Activated CD4-positive, alpha-beta T cell treated with anti-CD3 and anti-CD28 coated beads, Interleukin-2, amount 10 ng/mL, durations not matched to agents 24 days and 14 days (primary cell): ENCODE measurements at regions of chr17 and their contacts with region 1.

Region 1: DNA sequence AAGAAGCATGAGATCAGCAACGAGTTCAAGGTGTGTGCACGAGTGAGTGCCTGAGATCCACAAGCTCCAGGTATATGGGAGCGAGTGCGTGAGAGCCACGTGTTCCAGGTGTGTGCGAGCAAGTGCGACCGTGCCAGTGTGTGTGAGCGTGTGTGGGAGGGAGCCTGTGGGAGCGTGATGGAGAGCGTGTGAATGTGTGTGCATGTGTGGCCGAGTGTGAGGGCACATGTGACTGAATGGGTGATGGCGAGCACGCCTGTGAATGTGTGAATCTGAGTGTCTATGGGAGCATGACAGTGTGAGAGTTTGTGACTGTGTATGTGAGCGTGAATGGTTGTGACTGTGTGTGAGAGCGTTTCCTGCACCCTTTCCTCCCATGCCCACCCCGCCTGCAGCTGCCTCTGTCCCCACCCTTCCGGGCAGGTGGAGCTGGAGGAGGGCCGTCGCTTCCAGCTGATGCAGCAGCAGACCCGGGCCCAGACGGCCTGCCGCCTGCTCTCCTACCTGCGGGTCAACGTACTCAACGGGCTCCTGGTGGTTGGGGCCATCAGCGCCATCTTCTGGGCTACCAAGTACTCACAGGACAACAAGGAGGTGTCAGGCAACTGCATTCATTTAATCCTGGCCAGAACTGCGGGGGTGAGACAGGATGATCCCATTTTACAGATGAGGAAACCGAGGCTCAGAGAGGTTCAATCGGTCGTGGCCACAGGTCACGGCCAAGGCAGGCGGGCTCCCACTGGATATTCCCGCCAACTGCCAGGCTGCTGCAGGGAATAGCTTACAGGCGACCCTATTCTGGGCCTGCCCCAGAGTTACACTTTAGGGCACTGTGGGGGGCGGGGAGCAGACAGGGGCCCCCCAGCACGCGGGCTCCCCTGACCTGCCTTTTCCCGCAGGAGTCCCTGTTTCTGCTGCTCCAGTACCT is 3.7 kb downstream of the TMC8 start:
- DNase-seq: peak; percentile 94
- H3K4me3 Mint-ChIP-seq: peak overlapping the region; percentile 83
- H3K27ac Mint-ChIP-seq: peak overlapping the region; percentile 67
- H3K4me1 Mint-ChIP-seq: peaks cover 75% of the 10 kb centered on the region
- H3K27me3 Mint-ChIP-seq: no peaks in the 10 kb centered on the region

Region 2: GRCh38 chr17:77465358-77466041 is 668.7 kb before region 1 on chr17:
- intact Hi-C with region 1: loop called (anchors 5 kb)
- DNase-seq: peak; percentile 93
- H3K4me3 Mint-ChIP-seq: peak overlapping the region; percentile 77
- H3K27ac Mint-ChIP-seq: peak overlapping the region; percentile 91
- H3K4me1 Mint-ChIP-seq: peaks cover 71% of the 10 kb centered on the region
- H3K27me3 Mint-ChIP-seq: no peaks in the 10 kb centered on the region

Region 3: GRCh38 chr17:78082988-78083387 is 51.2 kb before region 1 on chr17:
- intact Hi-C with region 1: loop called (anchors 2 kb)
- DNase-seq: no peak
- H3K4me3 Mint-ChIP-seq: no peak overlapping the region
- H3K27ac Mint-ChIP-seq: no peak overlapping the region
- H3K4me1 Mint-ChIP-seq: peaks cover 6% of the 10 kb centered on the region
- H3K27me3 Mint-ChIP-seq: no peaks in the 10 kb centered on the region

Region 4: GRCh38 chr17:78101112-78101511 is 33.1 kb before region 1 on chr17:
- intact Hi-C with region 1: no loop called
- DNase-seq: no peak
- H3K4me3 Mint-ChIP-seq: no peak overlapping the region
- H3K27ac Mint-ChIP-seq: no peak overlapping the region
- H3K4me1 Mint-ChIP-seq: no peaks in the 10 kb centered on the region
- H3K27me3 Mint-ChIP-seq: no peaks in the 10 kb centered on the region

Region 5: GRCh38 chr17:78112518-78113226 is 21.6 kb before region 1 on chr17:
- intact Hi-C with region 1: loop called (anchors 1 kb)
- DNase-seq: peak; percentile 94
- H3K4me3 Mint-ChIP-seq: no peak overlapping the region
- H3K27ac Mint-ChIP-seq: no peak overlapping the region
- H3K4me1 Mint-ChIP-seq: peaks cover 30% of the 10 kb centered on the region
- H3K27me3 Mint-ChIP-seq: no peaks in the 10 kb centered on the region

Region 6: DNA sequence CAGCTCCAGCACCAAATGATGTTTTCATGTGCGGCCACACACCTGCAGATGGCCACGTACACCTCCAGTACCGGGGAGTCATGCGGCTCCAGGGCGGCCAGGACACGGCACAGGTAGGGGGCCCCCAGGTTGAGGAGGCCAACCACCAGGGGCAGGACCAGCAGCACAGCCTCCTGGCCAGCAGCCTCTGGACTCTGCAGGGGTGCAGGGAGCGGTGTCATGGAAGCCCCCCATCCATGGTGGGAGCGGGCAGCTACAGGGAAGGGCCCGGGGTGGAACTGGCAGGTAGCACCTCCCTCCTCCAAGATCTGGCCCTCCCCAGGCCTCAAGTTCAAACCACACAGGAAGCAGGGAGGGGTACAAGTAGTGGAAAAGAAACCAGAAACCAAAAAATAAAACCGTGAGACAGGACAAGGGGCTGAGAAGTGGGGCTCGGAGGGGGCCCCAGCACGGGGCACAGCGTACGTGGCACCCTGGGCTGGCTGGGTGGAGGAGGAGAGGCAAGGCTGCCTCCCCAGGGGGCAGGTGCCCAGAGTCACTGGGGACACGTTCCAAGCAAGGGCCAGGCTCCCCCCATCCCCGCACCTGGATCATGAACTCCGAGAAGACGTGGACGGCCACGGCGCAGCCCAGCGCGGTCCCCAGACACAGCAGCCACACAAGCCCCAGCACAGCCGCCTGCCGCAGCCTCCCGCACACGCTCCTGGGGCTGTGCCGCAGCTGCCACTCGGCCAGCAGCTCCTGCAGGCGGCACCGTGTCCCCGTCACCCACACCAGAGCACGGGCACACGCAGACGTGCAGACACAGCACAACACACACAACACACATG is 13.0 kb before region 1 on chr17:
- intact Hi-C with region 1: loop called (anchors 1 kb)
- DNase-seq: peak; percentile 91
- H3K4me3 Mint-ChIP-seq: peak overlapping the region; percentile 87
- H3K27ac Mint-ChIP-seq: peak overlapping the region; percentile 87
- H3K4me1 Mint-ChIP-seq: peaks cover 50% of the 10 kb centered on the region
- H3K27me3 Mint-ChIP-seq: no peaks in the 10 kb centered on the region

Region 7: DNA sequence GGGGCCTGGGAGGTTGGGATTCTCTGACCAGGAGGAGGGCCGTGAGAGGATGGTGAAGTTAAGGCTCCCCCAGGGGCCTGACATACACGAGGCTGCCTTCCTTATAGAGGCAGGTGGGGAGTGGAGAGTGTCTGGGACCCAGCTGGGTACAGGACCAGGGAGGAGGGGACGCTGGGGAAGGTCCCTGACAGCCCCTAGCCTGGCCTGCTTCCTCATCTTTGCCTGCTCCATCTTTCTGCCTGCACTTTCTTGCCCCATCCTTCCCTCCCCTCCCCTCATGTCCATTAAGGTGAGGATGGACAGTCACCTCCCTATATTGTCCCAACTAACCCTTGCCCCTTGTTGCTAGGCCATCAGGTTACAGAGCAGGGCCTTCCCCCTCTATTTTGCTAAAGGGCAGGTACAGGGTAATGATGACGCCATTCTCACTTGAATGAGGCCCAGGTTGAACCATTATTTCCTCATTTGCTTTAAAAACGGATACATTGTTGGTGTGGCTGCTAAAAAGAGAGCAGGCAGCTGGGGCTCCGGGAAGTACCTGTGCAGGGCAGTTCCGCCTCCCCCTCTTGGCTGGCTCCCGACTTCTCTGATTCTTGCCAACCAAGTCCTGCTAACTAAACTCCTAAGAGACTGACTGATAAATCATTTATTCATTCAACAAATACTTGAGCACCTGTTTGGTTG is 13.2 kb after region 1 on chr17:
- intact Hi-C with region 1: no loop called
- DNase-seq: peak; percentile 60
- H3K4me3 Mint-ChIP-seq: no peak overlapping the region
- H3K27ac Mint-ChIP-seq: peak overlapping the region; percentile 20
- H3K4me1 Mint-ChIP-seq: peaks cover 12% of the 10 kb centered on the region
- H3K27me3 Mint-ChIP-seq: peaks cover 3% of the 10 kb centered on the region

Region 8: DNA sequence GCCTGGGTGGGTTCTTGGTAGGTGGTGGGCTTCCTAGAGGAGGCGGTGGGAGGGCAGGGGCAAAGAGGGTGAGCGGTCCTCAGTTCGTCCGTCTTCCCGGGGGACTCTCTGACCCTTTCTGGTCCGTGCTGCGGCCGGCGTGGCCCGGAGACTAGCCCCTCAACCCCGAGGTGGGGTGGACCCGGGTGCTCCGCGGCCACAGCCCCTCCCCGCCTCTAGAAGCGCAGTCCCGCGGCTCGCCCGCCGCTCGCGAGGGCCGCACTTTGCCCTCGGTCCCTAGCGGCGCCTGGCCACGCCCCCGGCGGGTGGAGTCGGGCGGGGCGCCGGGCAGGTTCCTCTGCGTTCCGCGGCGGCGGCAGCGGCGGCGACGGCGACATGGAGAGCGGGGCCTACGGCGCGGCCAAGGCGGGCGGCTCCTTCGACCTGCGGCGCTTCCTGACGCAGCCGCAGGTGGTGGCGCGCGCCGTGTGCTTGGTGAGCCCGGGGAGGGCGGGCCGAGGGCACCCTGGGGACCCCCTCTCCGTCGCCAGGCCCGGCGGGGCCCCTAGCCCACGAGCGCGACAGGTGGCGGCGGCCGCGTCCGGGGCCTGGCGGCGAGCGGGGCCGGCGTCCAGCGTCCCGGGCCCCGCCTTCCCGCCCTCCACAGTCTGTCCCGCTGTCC is 34.1 kb after region 1 on chr17 and contains the start of gene SYNGR2:
- intact Hi-C with region 1: loop called (anchors 5 kb)
- DNase-seq: peak; percentile 98
- H3K4me3 Mint-ChIP-seq: peak within 1 kb of the TSS; percentile 81
- H3K27ac Mint-ChIP-seq: peak within 1 kb of the TSS; percentile 78
- H3K4me1 Mint-ChIP-seq: peaks cover 30% of the 10 kb centered on the region
- H3K27me3 Mint-ChIP-seq: no peaks in the 10 kb centered on the region
- total RNA-seq, gene SYNGR2: 123 and 125 TPM in 2 replicates

Region 9: GRCh38 chr17:78197147-78197832 is 63.1 kb after region 1 on chr17:
- intact Hi-C with region 1: no loop called
- DNase-seq: no peak
- H3K4me3 Mint-ChIP-seq: no peak overlapping the region
- H3K27ac Mint-ChIP-seq: no peak overlapping the region
- H3K4me1 Mint-ChIP-seq: peaks cover 6% of the 10 kb centered on the region
- H3K27me3 Mint-ChIP-seq: no peaks in the 10 kb centered on the region

Region 10: GRCh38 chr17:78250891-78251794 is 116.9 kb after region 1 on chr17:
- intact Hi-C with region 1: no loop called
- DNase-seq: peak; percentile 96
- H3K4me3 Mint-ChIP-seq: peak overlapping the region; percentile 85
- H3K27ac Mint-ChIP-seq: peak overlapping the region; percentile 84
- H3K4me1 Mint-ChIP-seq: peaks cover 40% of the 10 kb centered on the region
- H3K27me3 Mint-ChIP-seq: no peaks in the 10 kb centered on the region

Region 11: DNA sequence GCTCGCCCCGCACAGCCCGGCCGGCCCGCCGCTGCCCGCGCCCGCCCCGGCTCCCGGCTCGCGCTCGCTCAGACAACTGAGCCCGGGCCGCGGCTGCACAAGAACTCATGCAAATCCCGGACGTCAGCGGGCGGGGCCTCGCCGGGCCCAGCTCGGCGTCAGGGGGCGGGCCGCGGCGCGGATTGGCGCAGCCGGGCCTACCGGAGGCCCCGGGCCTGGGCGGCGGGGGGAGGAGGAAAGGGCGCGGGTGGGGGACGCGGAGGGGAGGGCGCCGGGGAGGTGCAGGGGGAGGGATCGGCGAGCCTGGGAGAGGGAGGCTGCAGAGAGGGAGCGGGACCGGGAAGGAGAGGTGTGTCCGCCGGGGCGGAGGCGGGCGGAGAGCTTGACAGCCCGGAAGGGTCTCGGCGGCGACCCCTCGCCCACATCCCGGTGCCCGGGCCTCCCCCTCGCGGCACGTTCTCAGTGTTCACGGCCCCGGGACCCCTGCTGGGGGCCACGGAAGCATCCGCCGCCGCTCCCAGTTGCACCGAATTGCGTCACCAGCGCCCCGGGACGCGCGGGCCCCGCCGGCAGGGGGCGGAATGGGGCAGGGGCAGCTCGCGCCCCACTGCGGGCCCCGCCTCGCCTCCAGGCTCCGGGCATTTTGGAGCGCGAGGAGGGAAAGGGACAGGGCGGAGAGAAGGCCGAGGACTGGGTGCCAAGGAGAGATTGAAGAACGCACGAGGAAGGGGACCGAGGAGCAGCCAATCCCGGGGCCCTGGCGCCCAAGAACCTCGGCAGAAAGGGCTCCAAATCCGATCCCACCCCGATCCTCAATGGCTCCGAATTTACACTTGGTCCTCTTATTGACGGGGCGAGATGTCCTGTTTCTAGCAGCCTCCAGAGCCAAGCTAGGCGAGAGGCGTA is 1705.4 kb after region 1 on chr17 and contains the start of gene CBX4:
- intact Hi-C with region 1: loop called (anchors 5 kb)
- DNase-seq: peak; percentile 96
- H3K4me3 Mint-ChIP-seq: peak within 1 kb of the TSS; percentile 97
- H3K27ac Mint-ChIP-seq: peak within 1 kb of the TSS; percentile 90
- H3K4me1 Mint-ChIP-seq: peaks cover 26% of the 10 kb centered on the region
- H3K27me3 Mint-ChIP-seq: peaks cover 29% of the 10 kb centered on the region
- total RNA-seq, gene CBX4: 18.5 and 19.4 TPM in 2 replicates